ENCODE measurements at regions of chr11 and their contacts with region 1.

Region 1: GRCh38 chr11:9613118-9613829 is 39.8 kb downstream of the WEE1 start:
- DNase-seq: peak; percentile 80
- H3K4me3 Mint-ChIP-seq: peak overlapping the region; percentile 89
- H3K27ac Mint-ChIP-seq: peak overlapping the region; percentile 99
- H3K4me1 Mint-ChIP-seq: peaks cover 44% of the 10 kb centered on the region
- H3K27me3 Mint-ChIP-seq: peaks cover 1% of the 10 kb centered on the region

Region 2: GRCh38 chr11:9534791-9535781 is 78.2 kb before region 1 on chr11:
- intact Hi-C with region 1: loop called (anchors 1 kb)
- DNase-seq: peak; percentile 59
- H3K4me3 Mint-ChIP-seq: no peak overlapping the region
- H3K27ac Mint-ChIP-seq: no peak overlapping the region
- H3K4me1 Mint-ChIP-seq: no peaks in the 10 kb centered on the region
- H3K27me3 Mint-ChIP-seq: no peaks in the 10 kb centered on the region

Region 3: GRCh38 chr11:9601037-9601875 is 12.0 kb before region 1 on chr11:
- intact Hi-C with region 1: loop called (anchors 1 kb)
- DNase-seq: peak; percentile 74
- H3K4me3 Mint-ChIP-seq: peak overlapping the region; percentile 71
- H3K27ac Mint-ChIP-seq: peak overlapping the region; percentile 90
- H3K4me1 Mint-ChIP-seq: peaks cover 34% of the 10 kb centered on the region
- H3K27me3 Mint-ChIP-seq: peaks cover 4% of the 10 kb centered on the region

Region 4: GRCh38 chr11:9757809-9758636 is 144.7 kb after region 1 on chr11:
- intact Hi-C with region 1: loop called (anchors 1 kb)
- DNase-seq: peak; percentile 87
- H3K4me3 Mint-ChIP-seq: peak overlapping the region; percentile 80
- H3K27ac Mint-ChIP-seq: peak overlapping the region; percentile 76
- H3K4me1 Mint-ChIP-seq: peaks cover 57% of the 10 kb centered on the region
- H3K27me3 Mint-ChIP-seq: peaks cover 2% of the 10 kb centered on the region

Region 5: DNA sequence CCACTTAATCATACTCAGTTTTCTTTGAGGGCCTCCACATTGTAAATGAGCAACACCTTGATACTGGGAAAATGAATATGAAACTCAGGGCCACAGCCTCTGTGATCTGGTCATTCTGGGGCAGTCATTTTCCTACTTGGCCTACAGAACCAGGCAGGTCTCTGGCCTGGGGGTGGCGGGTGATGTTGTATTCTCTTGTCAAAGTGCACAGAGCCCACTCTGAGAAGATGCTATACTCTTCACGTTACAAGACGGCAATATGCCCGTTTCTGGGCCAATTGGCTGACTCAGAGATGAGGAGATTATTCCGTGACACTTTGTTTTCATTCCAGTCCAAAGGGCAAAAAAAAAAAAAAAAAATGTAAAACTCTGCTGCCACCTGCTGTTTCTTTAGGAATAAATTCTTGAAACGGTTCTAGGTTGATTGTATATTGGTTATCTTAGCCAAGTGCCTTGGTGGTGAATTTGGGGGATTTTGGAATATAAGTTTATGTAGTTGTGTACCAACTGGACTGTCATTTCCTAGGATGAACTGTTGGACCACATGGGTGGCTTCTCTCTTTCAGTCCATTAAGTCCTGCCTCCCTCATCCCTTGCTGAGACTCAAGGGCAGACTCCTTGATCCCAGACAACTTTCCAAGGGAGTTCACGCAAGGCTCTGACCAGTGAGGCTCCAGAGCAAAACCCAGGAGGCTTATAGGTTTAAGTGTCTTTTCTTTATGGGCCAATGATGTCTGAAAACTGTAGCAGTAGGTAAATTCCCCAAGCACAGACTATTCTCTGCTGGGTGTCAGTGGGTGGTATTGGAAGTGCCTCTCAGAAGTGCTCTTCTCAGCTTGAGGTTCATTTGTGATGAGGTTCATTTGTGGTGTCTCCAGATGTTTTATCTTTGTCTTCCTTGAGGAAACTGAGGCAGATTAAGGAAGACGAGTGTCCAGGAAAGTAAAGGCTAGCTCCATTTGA is 709.8 kb after region 1 on chr11:
- intact Hi-C with region 1: loop called (anchors 5 kb)
- DNase-seq: no peak
- H3K4me3 Mint-ChIP-seq: no peak overlapping the region
- H3K27ac Mint-ChIP-seq: peak overlapping the region; percentile 88
- H3K4me1 Mint-ChIP-seq: peaks cover 20% of the 10 kb centered on the region
- H3K27me3 Mint-ChIP-seq: peaks cover 16% of the 10 kb centered on the region